ENCODE measurements at regions of chr9 and their contacts with region 1.

Region 1: DNA sequence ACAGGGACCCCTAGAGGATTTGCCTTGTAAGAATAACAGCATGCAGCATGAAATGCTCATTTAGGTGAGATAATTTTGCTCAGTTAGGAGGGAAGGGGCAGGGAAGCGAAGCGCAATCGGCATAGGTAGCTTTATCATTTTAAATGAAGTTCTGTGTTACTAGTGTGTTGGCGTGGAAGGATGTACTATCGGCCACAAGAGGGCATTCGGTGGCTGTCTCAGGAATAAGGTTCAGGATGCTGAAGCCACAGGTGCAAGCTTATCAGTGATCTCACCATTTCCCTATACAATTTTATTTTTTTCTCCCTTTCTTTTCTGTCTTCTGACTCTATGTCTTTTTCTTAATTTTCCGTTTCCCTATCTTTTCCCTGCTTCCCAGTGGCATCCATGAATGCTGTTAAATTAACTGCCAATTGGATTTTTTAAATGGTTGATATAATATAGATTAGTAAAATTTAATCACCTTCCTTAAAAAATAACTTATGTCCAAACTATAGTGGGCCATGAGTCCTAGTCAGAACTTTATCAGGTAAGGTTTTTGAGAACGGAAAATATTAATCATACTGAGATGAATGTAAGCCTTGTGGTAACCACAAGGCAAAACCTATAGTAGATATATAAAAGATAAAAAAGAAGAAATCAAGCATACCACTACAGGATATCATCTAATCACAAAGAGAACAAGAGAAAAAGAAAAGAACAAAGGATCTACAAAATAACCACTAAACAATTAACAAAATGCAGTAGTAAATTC is 1.2 kb upstream of the INSL6 start:
- DNase-seq: peak; percentile 79
- H3K4me3 Mint-ChIP-seq: no peak overlapping the region
- H3K27ac Mint-ChIP-seq: no peak overlapping the region
- H3K4me1 Mint-ChIP-seq: peaks cover 13% of the 10 kb centered on the region
- H3K27me3 Mint-ChIP-seq: no peaks in the 10 kb centered on the region

Region 2: DNA sequence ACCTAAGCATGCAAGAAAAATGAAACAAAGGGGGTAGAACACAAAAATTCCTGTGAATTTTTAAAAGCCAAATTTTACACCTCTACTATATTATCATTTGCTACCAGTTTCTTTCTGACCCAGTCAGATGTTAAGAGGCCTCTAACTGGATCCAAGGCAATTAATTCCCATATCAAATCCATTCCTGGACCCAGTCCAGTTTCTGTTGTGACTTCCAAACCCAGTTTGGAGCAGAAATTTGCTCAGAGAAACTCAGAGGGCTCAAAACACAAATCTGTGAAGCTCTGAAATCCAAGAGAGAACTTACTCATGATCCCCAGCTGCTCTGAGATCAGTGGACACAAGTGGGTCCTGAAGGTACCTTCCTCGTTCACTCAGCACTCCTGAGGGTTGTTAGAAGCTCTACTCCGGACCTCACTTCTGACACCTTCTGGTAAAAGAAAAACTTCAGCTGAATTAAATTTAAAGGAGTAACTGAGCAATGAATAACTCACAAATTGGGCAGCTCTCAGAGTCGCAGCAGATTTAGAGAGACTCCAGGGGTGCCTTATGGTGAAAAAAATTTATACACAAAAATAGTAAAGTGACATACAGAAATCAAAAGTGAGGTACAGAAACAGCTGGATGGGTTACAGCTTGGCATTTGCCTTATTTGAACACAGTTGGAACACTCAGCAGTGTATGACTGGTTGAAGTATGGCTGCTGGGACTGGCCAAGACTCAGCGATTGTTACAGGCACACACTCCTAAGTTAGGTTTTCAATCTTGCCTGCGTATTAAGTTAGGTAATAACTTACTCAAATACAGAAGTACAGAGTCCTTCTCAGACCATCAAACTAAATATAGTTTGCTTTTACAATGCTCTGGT is 77.0 kb after region 1 on chr9:
- CTCF ChIA-PET with region 1: interaction called, 7 read pairs
- intact Hi-C with region 1: loop called (anchors 2 kb)
- DNase-seq: peak; percentile 11
- H3K4me3 Mint-ChIP-seq: no peak overlapping the region
- H3K27ac Mint-ChIP-seq: no peak overlapping the region
- H3K4me1 Mint-ChIP-seq: peaks cover 15% of the 10 kb centered on the region
- H3K27me3 Mint-ChIP-seq: no peaks in the 10 kb centered on the region

Region 3: DNA sequence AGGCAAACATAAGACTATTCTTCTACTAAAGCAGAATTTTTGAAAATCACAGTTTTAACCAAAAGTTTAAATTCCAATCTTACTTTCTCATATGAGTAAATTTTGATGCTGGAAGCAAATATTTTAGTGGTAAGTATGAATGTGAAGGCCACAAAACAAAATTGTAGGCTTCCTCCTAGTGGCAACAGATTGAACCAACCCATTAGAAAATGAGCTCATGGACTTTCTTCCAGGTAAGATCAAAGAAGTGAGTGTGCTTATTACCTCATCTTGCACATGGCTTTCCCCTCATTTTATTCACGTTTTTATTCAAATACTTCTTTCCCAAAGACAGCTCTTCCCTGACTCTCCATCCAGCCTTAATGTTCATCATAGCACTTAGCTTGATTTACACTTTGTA is 134.5 kb after region 1 on chr9:
- CTCF ChIA-PET with region 1: interaction called, 6 read pairs
- intact Hi-C with region 1: loop called (anchors 5 kb)
- DNase-seq: no peak
- H3K4me3 Mint-ChIP-seq: no peak overlapping the region
- H3K27ac Mint-ChIP-seq: no peak overlapping the region
- H3K4me1 Mint-ChIP-seq: peaks cover 7% of the 10 kb centered on the region
- H3K27me3 Mint-ChIP-seq: no peaks in the 10 kb centered on the region

Region 4: DNA sequence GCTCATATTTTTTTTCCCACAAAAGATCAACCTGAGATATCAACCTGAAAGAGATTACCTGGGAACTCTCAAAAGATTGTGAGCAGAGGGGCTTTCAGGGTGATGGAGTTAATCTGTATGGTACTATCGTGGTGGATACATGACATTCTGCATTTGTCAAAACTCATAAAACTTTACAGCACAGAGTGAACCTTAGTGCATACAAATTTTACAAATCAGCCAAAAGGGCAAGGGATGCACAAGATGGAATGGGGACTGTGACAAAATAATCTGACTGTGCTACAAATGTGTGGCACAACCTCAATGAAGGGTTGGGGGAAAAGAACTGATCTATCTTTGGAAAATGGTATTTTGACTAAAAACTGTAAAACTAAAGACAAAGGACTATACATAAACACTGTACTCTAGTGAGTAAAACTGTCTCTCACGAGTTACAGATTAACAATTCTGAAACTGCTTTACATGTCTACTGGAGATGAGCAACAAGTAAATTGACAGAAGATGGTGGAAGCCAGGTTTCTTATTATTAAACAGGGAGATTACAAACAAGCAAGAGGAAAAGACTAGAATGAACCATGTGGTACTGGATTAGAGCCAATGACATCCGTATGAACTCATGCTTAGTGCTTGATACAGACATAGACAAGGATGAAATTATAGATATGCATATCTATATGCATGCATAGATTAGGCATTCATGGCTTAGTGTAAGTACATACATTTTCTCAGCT is 177.9 kb after region 1 on chr9:
- CTCF ChIA-PET with region 1: no interaction called
- intact Hi-C with region 1: loop called (anchors 1 kb)
- DNase-seq: peak; percentile 22
- H3K4me3 Mint-ChIP-seq: no peak overlapping the region
- H3K27ac Mint-ChIP-seq: peak overlapping the region; percentile 35
- H3K4me1 Mint-ChIP-seq: peaks cover 25% of the 10 kb centered on the region
- H3K27me3 Mint-ChIP-seq: no peaks in the 10 kb centered on the region

Region 5: GRCh38 chr9:5425006-5425628 is 238.5 kb after region 1 on chr9:
- CTCF ChIA-PET with region 1: interaction called, 45 read pairs
- intact Hi-C with region 1: loop called (anchors 1 kb)
- DNase-seq: no peak
- H3K4me3 Mint-ChIP-seq: no peak overlapping the region
- H3K27ac Mint-ChIP-seq: no peak overlapping the region
- H3K4me1 Mint-ChIP-seq: peaks cover 13% of the 10 kb centered on the region
- H3K27me3 Mint-ChIP-seq: no peaks in the 10 kb centered on the region

Region 6: DNA sequence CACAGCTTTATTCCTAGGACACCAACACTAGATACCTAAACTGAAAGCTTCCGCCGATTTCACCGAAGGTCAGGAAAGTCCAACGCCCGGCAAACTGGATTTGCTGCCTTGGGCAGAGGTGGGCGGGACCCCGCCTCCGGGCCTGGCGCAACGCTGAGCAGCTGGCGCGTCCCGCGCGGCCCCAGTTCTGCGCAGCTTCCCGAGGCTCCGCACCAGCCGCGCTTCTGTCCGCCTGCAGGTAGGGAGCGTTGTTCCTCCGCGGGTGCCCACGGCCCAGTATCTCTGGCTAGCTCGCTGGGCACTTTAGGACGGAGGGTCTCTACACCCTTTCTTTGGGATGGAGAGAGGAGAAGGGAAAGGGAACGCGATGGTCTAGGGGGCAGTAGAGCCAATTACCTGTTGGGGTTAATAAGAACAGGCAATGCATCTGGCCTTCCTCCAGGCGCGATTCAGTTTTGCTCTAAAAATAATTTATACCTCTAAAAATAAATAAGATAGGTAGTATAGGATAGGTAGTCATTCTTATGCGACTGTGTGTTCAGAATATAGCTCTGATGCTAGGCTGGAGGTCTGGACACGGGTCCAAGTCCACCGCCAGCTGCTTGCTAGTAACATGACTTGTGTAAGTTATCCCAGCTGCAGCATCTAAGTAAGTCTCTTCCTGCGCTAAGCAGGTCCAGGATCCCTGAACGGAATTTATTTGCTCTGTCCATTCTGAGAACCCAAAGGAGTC is 263.9 kb after region 1 on chr9 and contains the start of gene CD274:
- CTCF ChIA-PET with region 1: interaction called, 6 read pairs
- intact Hi-C with region 1: loop called (anchors 1 kb)
- DNase-seq: peak; percentile 83
- H3K4me3 Mint-ChIP-seq: peak within 1 kb of the TSS; percentile 89
- H3K27ac Mint-ChIP-seq: peak within 1 kb of the TSS; percentile 92
- H3K4me1 Mint-ChIP-seq: peaks cover 65% of the 10 kb centered on the region
- H3K27me3 Mint-ChIP-seq: no peaks in the 10 kb centered on the region
- total RNA-seq, gene CD274: 14.2 to 15.0 TPM

Region 7: DNA sequence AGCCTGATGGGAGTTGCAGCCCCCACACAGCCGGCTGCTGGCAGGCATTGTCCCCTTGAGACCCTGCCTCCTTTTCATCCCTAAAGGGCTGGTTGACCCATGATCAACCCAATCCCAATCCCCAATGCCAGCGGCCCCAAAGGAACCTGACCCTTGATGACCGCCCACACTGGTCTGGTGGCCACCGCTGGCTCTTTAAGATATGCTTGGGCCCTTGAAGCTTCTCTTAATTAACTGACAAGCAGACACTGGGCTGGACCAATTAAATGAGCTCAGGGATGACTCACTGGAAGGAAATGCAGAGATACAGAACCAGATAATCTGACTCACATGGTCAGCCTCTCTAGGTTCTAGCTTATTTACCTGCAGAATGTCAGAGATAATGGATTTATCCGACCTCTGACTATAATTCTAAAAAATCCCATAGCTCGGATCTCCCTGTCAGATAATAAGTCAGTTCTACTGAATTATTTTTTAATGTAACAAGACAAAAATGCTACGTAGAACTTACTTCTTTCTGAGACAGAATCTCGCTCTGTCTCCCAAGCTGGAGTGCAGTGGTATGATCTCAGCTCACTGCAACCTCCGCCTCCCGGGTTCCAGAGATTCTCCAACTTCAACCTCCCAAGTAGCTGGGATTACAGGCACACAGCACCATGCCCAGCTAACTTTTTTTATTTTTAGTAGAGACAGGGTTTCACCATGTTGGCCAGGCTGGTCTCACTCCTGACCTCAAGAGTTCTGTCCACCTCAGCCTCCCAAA is 693.0 kb after region 1 on chr9:
- CTCF ChIA-PET with region 1: no interaction called
- intact Hi-C with region 1: no loop called
- DNase-seq: no peak
- H3K4me3 Mint-ChIP-seq: no peak overlapping the region
- H3K27ac Mint-ChIP-seq: no peak overlapping the region
- H3K4me1 Mint-ChIP-seq: peaks cover 3% of the 10 kb centered on the region
- H3K27me3 Mint-ChIP-seq: no peaks in the 10 kb centered on the region

Measured in activated naive CD4-positive, alpha-beta T cell treated with anti-CD3 and anti-CD28 coated beads for 36 hours (primary cell).